ENCODE measurements at regions of chr1 and their contacts with region 1.

Region 1: DNA sequence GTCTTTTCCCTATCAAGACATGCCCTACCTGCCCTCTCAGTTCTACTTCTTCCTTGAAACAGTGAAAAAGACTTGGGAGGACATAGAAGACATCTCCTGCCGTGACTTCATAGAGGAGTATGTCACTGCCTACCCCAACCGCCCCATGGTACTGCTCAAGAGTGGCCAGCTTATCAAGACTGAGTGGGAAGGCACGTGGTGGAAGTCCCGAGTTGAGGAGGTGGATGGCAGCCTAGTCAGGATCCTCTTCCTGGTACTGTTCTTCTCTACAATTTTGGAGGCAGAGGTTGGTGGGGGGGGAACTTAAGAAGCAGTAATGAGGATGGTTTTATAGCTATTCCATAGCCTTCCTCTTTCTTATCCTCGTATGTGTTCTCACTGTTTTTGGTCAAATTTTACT is 18.7 kb downstream of the SETDB1 start:
- DNase-seq: no peak
- H3K4me3 ChIP-seq: no peak overlapping the region
- H3K27me3 ChIP-seq: no peaks in the 10 kb centered on the region
- CTCF ChIP-seq: no peak

Region 2: GRCh38 chr1:150960646-150961045 is 15.8 kb after region 1 on chr1:
- CTCF ChIA-PET with region 1: interaction called, 3 read pairs
- POLR2A ChIA-PET with region 1: interaction called, 31 read pairs
- DNase-seq: no peak
- H3K4me3 ChIP-seq: no peak overlapping the region
- H3K27me3 ChIP-seq: no peaks in the 10 kb centered on the region
- CTCF ChIP-seq: no peak